HepG2 (cell line): ENCODE measurements at regions of chr11 and their contacts with region 1.

Region 1: DNA sequence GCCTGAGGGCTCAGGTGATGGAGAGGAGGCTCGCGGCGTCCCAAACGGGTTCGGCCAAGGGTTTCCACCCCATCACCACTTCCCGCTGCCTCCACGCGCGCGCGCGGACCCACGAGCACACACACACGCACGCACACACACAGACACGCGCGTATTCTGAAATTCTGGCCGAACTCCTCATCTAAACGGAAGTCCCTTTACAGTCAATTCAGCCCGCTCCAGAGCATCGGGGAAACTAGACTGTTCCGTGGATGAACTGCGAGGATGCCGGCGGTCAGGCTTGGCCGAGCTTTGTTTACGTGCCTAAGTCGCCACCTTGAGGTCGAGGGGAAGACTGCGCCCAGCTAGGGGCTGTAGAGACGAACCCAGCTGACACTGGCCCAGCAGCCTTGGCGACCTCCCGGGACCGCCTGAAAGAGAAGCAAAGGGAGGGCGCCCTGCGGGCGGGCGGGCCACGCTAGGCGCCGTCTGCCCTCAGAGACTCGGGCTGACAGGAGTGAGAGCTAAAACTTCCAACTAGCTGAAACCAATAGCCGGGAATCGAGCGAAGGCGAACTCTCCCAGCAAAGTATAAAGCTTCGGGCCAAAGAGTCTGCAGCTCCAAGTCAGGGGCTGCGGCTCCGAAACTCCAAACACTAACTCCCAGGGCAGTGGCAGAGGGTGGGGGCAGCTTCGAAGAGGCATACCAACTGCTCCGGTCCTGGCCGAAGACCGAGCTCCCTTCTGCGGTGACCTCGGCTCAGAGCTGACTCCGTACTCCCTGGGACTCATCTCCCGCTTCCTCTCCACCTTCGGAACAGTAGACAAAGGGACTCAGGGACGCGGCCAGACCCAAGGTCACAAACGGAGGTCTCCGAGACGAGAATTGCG is 124.7 kb upstream of the C11orf58 start:
- DNase-seq: peak; percentile 73
- ATAC-seq: peak; percentile 99
- H3K4me3 ChIP-seq: peak overlapping the region; percentile 42 to 73 (median 55)
- H3K27ac ChIP-seq: no peak overlapping the region
- H3K4me1 ChIP-seq: peaks cover 11% of the 10 kb centered on the region
- H3K27me3 ChIP-seq: peaks cover 7 to 51% of the 10 kb centered on the region in 2 experiments; a peak in 4 of 5 replicates
- CTCF ChIP-seq: peak; percentile 97
- EP300 ChIP-seq: no peak
- POLR2A ChIP-seq: no peak
- RAD21 ChIP-seq: peak; percentile 85

Region 2: GRCh38 chr11:15327786-15328231 is 1285.9 kb before region 1 on chr11:
- CTCF ChIA-PET with region 1: no interaction called
- POLR2A ChIA-PET with region 1: no interaction called
- in situ Hi-C with region 1: no loop called
- intact Hi-C with region 1: loop called (anchors 10 kb)
- DNase-seq: peak; percentile 16
- ATAC-seq: peak; percentile 88
- H3K4me3 ChIP-seq: no peak overlapping the region
- H3K27ac ChIP-seq: no peak overlapping the region
- H3K4me1 ChIP-seq: no peaks in the 10 kb centered on the region
- H3K27me3 ChIP-seq: no peaks in the 10 kb centered on the region
- CTCF ChIP-seq: peak; percentile 77
- EP300 ChIP-seq: no peak
- POLR2A ChIP-seq: no peak
- RAD21 ChIP-seq: no peak

Region 3: DNA sequence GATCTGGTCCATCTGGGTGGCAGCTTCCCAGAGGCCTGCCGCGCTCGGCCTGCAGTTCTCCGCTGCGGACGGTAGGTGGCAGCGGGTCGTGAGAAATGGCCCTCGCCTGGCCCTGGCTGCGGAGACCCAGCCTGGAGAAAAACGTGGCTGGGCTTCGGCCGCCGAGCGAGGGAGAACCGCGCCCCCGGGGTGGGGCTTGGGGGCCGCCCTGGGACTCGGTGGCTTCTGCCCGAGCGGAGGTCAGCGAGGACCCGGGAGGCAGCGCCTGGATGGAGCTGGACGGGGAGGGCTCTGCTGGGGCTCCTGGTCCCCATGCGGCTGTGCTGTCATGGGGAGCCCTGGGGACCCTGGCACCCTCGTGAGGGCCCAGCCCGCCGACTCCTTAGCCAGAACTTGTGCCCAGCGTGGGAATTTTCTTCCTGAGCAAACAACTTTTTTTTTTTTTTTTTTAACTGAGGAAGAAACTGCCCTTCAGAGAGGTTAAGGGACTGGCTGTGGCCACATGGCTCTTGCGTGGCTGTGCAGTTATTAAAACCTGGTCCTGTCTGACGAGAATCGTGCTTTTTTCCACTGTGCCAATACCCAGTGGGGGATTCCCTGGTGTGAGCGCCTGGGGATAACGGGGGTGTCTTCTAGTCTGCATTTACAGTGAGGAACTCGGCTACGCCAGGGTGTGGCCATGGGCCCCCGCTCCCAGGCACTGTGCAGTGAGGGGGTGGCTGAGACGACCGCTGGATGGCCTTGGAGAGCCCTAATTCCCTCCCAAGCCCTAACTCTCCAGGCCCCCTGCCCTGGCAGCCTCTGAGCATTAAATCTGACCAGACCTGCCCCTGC is 963.4 kb before region 1 on chr11:
- CTCF ChIA-PET with region 1: no interaction called
- POLR2A ChIA-PET with region 1: no interaction called
- in situ Hi-C with region 1: no loop called
- intact Hi-C with region 1: loop called (anchors 1 kb)
- DNase-seq: peak; percentile 84
- ATAC-seq: peak; percentile 100
- H3K4me3 ChIP-seq: peak overlapping the region in 1 of 3 experiments; percentile 39; a peak in 1 of 6 replicates
- H3K27ac ChIP-seq: no peak overlapping the region
- H3K4me1 ChIP-seq: peaks cover 7% of the 10 kb centered on the region
- H3K27me3 ChIP-seq: peaks cover 0 to 7% of the 10 kb centered on the region in 2 experiments; a peak in 3 of 5 replicates
- CTCF ChIP-seq: peak; percentile 99
- EP300 ChIP-seq: peak; percentile 62 to 85
- POLR2A ChIP-seq: no peak
- RAD21 ChIP-seq: peak; percentile 94

Region 4: GRCh38 chr11:15819679-15820286 is 794.0 kb before region 1 on chr11:
- CTCF ChIA-PET with region 1: interaction called, 15 read pairs
- POLR2A ChIA-PET with region 1: no interaction called
- in situ Hi-C with region 1: loop called (anchors 10 kb)
- intact Hi-C with region 1: loop called (anchors 1 kb)
- DNase-seq: peak; percentile 46
- ATAC-seq: peak; percentile 98
- H3K4me3 ChIP-seq: no peak overlapping the region
- H3K27ac ChIP-seq: no peak overlapping the region
- H3K4me1 ChIP-seq: no peaks in the 10 kb centered on the region
- H3K27me3 ChIP-seq: no peaks in the 10 kb centered on the region
- CTCF ChIP-seq: peak; percentile 94
- EP300 ChIP-seq: no peak
- POLR2A ChIP-seq: no peak
- RAD21 ChIP-seq: peak; percentile 73

Region 5: GRCh38 chr11:15852179-15852578 is 761.6 kb before region 1 on chr11:
- CTCF ChIA-PET with region 1: interaction called, 7 read pairs
- POLR2A ChIA-PET with region 1: no interaction called
- in situ Hi-C with region 1: no loop called
- intact Hi-C with region 1: loop called (anchors 1 kb)
- DNase-seq: peak; percentile 13
- ATAC-seq: peak; percentile 35; the same call in 1 of the 3 replicates
- H3K4me3 ChIP-seq: no peak overlapping the region
- H3K27ac ChIP-seq: no peak overlapping the region
- H3K4me1 ChIP-seq: no peaks in the 10 kb centered on the region
- H3K27me3 ChIP-seq: no peaks in the 10 kb centered on the region
- CTCF ChIP-seq: peak; percentile 54
- EP300 ChIP-seq: no peak
- POLR2A ChIP-seq: no peak
- RAD21 ChIP-seq: no peak

Region 6: GRCh38 chr11:15901054-15901453 is 712.7 kb before region 1 on chr11:
- CTCF ChIA-PET with region 1: no interaction called
- POLR2A ChIA-PET with region 1: no interaction called
- in situ Hi-C with region 1: loop called (anchors 5 kb)
- intact Hi-C with region 1: loop called (anchors 1 kb)
- DNase-seq: peak; percentile 16
- ATAC-seq: peak; percentile 93
- H3K4me3 ChIP-seq: no peak overlapping the region
- H3K27ac ChIP-seq: no peak overlapping the region
- H3K4me1 ChIP-seq: peaks cover 11% of the 10 kb centered on the region
- H3K27me3 ChIP-seq: 0 out of 5 replicates have a peak, but pooled peaks cover 0 to 5% of the 10 kb centered on the region in 2 experiments
- CTCF ChIP-seq: peak; percentile 82
- EP300 ChIP-seq: no peak
- POLR2A ChIP-seq: no peak
- RAD21 ChIP-seq: no peak

Region 7: DNA sequence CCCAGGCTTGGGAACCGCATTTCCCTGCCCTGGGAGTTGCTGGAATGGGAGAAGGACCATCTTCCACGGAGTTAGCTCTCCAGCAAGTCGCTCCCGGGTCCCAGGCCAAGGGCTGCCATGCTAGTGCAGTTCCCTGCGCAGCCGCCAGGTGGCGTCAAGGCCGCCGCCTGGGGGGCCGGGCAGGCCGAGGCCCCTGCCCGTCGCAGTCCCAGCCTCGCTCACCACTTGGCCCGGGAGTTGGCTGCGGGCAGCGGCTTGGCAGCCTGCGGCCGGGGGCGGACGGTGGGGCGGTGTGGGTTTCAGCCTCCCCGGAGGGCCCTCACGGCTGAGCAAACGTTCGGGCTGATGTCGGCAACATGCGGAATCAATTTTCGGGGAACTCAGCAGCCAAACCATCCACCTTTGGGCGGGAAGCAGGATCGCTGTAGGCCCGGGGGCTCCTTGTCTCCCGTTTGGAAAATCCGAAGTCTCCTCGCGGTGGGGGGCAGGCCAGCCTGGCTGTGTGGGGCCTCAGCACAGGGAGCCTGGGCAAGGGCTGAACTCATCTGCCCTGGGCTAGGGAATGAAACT is 672.5 kb before region 1 on chr11:
- CTCF ChIA-PET with region 1: interaction called, 5 read pairs
- POLR2A ChIA-PET with region 1: no interaction called
- in situ Hi-C with region 1: loop called (anchors 10 kb)
- intact Hi-C with region 1: loop called (anchors 1 kb)
- DNase-seq: no peak
- ATAC-seq: peak; percentile 78
- H3K4me3 ChIP-seq: no peak overlapping the region
- H3K27ac ChIP-seq: no peak overlapping the region
- H3K4me1 ChIP-seq: no peaks in the 10 kb centered on the region
- H3K27me3 ChIP-seq: peaks cover 0 to 3% of the 10 kb centered on the region in 2 experiments; a peak in 2 of 5 replicates
- CTCF ChIP-seq: peak; percentile 76
- EP300 ChIP-seq: no peak
- POLR2A ChIP-seq: no peak
- RAD21 ChIP-seq: peak; percentile 86

Region 8: DNA sequence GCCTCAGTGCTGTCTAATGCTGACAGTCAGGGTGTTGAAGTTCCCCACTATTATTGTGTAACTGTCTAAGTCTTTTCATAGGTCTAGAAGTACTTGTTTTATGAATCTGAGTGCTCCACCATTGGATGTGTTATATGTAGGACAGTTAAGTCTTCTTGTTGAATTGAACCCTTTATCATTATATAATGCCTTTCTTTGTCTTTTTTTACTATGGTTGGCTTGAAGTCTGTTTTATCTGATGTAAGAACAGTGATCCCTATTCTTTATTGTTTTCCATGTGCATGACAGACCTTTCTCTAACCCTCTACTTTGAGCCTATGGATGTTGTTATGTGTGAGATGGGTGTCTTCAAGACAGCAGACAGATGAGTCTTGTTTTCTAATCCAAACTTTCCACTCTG is 16.9 kb after region 1 on chr11:
- CTCF ChIA-PET with region 1: no interaction called
- POLR2A ChIA-PET with region 1: no interaction called
- in situ Hi-C with region 1: no loop called
- intact Hi-C with region 1: no loop called
- DNase-seq: no peak
- ATAC-seq: no peak
- H3K4me3 ChIP-seq: no peak overlapping the region
- H3K27ac ChIP-seq: no peak overlapping the region
- H3K4me1 ChIP-seq: no peaks in the 10 kb centered on the region
- H3K27me3 ChIP-seq: no peaks in the 10 kb centered on the region
- CTCF ChIP-seq: no peak
- EP300 ChIP-seq: no peak
- POLR2A ChIP-seq: no peak
- RAD21 ChIP-seq: no peak